Colonic mucosa (tissue), 4 donors: ENCODE measurements at regions of chr2 and their contacts with region 1.

Region 1: GRCh38 chr2:57759822-57760300 is 286.7 kb upstream of the VRK2 start:
- DNase-seq: peak; percentile 85
- H3K4me3 ChIP-seq: peak overlapping the region; percentile 13
- H3K27ac ChIP-seq: no peak overlapping the region
- H3K4me1 ChIP-seq: peaks cover 4% of the 10 kb centered on the region
- H3K27me3 ChIP-seq: no peaks in the 10 kb centered on the region
- CTCF ChIP-seq: peak; percentile 94

Region 2: GRCh38 chr2:55810622-55811020 is 1949.2 kb before region 1 on chr2:
- intact Hi-C with region 1: no loop called
- DNase-seq: no peak
- H3K4me3 ChIP-seq: no peak overlapping the region
- H3K27ac ChIP-seq: no peak overlapping the region
- H3K4me1 ChIP-seq: no peaks in the 10 kb centered on the region
- H3K27me3 ChIP-seq: no peaks in the 10 kb centered on the region
- CTCF ChIP-seq: no peak

Region 3: GRCh38 chr2:57906152-57906732 is 146.4 kb after region 1 on chr2:
- intact Hi-C with region 1: loop called (anchors 10 kb)
- DNase-seq: no peak
- H3K4me3 ChIP-seq: no peak overlapping the region
- H3K27ac ChIP-seq: no peak overlapping the region
- H3K4me1 ChIP-seq: no peaks in the 10 kb centered on the region
- H3K27me3 ChIP-seq: no peaks in the 10 kb centered on the region
- CTCF ChIP-seq: peak; percentile 68

Region 4: GRCh38 chr2:58271826-58272225 is 512.0 kb after region 1 on chr2:
- intact Hi-C with region 1: loop called (anchors 10 kb)
- DNase-seq: no peak
- H3K4me3 ChIP-seq: no peak overlapping the region
- H3K27ac ChIP-seq: no peak overlapping the region
- H3K4me1 ChIP-seq: no peaks in the 10 kb centered on the region
- H3K27me3 ChIP-seq: no peaks in the 10 kb centered on the region
- CTCF ChIP-seq: no peak

Region 5: GRCh38 chr2:58449286-58450010 is 689.6 kb after region 1 on chr2:
- intact Hi-C with region 1: loop called (anchors 5 kb)
- DNase-seq: no peak
- H3K4me3 ChIP-seq: no peak overlapping the region
- H3K27ac ChIP-seq: no peak overlapping the region
- H3K4me1 ChIP-seq: no peaks in the 10 kb centered on the region
- H3K27me3 ChIP-seq: no peaks in the 10 kb centered on the region
- CTCF ChIP-seq: no peak